ENCODE measurements at regions of chr11 and their contacts with region 1.

Region 1: GRCh38 chr11:34192481-34193401 is 87.3 kb downstream of the NAT10 start:
- DNase-seq: peak; percentile 60 to 91
- H3K4me3 ChIP-seq: peak overlapping the region; percentile 6 to 36
- H3K27ac ChIP-seq: peak overlapping the region; percentile 85 to 86
- H3K4me1 ChIP-seq: peaks cover 0 to 30% of the 10 kb centered on the region in 2 donors
- H3K27me3 ChIP-seq: no peaks in the 10 kb centered on the region
- CTCF ChIP-seq: no peak

Region 2: DNA sequence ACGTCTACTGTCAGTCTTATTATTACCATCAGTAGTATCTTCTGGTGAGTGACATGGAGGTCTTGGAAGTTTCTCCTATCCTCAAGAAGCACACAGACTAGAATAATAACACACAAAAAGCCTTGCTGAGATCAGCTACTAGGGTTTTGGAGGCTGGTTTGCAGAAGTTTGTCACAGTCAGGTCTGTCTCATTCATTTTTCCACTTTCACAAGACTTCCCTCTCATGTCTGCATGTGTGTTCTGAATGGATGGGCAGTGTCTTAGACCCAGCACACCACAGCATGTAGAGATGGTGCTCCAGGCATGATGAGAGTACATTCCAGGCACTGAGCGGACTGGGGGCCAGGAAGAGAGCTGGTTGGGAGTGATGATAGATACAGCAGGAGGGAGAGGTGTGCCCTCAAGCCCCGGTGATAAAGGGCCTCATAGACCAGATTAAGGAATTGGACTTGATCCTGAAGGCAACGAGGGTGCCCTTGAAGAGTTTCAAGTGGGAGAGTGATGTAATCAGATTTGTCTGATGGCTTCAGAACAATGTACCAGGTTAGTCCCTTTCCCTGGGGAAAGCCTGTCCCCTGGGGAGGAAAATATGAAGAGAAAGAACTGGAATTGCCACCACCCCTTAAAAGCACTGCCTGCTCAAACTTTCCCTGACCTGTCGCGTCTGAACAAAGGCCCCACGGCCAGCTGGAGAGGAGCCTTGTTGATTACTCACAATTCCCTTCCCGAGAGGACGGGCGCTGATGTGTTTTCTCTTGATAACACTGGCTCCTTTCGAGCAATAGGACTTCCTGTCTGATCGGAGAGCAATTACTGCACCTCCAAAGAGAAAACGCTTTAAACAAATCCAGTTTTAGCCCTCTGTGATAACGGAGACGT is 255.8 kb before region 1 on chr11:
- intact Hi-C with region 1: no loop called
- DNase-seq: peak; percentile 57 to 92
- H3K4me3 ChIP-seq: peak overlapping the region in 1 of 2 donors; percentile 9
- H3K27ac ChIP-seq: peak overlapping the region; percentile 76 to 79
- H3K4me1 ChIP-seq: peaks cover 9 to 39% of the 10 kb centered on the region in 2 donors
- H3K27me3 ChIP-seq: no peaks in the 10 kb centered on the region
- CTCF ChIP-seq: no peak

Region 3: GRCh38 chr11:34174412-34175041 is 18.2 kb before region 1 on chr11:
- intact Hi-C with region 1: loop called (anchors 1 kb)
- DNase-seq: peak in 1 of 2 donors; percentile 89
- H3K4me3 ChIP-seq: peak overlapping the region; percentile 47 to 58
- H3K27ac ChIP-seq: peak overlapping the region; percentile 13 to 31
- H3K4me1 ChIP-seq: peaks cover 5 to 7% of the 10 kb centered on the region in 2 donors
- H3K27me3 ChIP-seq: no peaks in the 10 kb centered on the region
- CTCF ChIP-seq: peak; percentile 95 to 99 (median 99)

Region 4: DNA sequence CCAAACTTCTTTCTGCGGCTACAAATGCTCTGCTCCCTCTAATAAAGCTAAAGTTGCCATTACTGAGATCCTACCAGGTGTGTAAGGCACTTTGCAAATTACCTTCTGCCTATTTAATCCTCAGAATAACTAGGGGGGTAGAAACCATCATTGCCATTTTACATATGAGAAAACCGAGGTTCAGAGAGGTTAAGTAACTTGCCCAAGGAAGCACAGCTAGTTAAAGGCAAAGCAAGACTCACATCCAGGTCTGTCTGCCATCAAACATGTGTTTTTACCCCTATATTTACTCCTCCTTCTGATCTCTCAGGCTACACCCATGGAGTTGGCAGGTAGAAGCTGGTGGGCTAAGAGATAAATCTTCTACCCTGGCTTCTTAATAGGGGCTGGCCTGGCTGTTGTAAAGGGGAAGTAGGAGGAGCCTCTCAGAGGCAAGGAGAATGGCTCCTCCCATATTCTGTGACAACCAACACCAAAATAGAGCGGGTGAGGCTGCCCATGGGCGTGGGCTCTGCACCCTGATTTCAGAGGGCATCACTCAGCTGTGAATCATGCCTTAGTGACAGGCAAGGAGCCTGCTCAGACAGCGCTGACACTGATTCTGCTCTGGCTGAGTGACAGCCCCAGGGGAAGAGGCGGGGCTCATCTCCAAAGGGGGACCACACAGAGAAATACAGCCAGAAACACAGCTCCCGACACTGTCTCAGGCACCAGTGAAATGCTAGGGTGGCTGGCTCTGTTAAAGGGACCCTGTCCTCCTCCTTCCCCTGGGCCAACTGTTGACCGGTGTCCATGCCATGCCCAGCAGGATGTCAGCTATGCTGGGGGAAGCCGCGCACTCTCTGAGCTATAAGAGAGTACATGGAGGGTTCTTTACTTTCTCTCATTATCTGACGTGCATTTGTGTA is 58.2 kb after region 1 on chr11:
- intact Hi-C with region 1: loop called (anchors 5 kb)
- DNase-seq: peak; percentile 37 to 87
- H3K4me3 ChIP-seq: peak overlapping the region; percentile 11 to 50
- H3K27ac ChIP-seq: peak overlapping the region; percentile 78 to 86
- H3K4me1 ChIP-seq: peaks cover 3 to 11% of the 10 kb centered on the region in 2 donors
- H3K27me3 ChIP-seq: no peaks in the 10 kb centered on the region
- CTCF ChIP-seq: no peak

Region 5: GRCh38 chr11:34274723-34275401 is 82.1 kb after region 1 on chr11:
- intact Hi-C with region 1: loop called (anchors 5 kb)
- DNase-seq: peak; percentile 71 to 97
- H3K4me3 ChIP-seq: no peak overlapping the region
- H3K27ac ChIP-seq: peak overlapping the region; percentile 76 to 80
- H3K4me1 ChIP-seq: peaks cover 4 to 13% of the 10 kb centered on the region in 2 donors
- H3K27me3 ChIP-seq: no peaks in the 10 kb centered on the region
- CTCF ChIP-seq: no peak

Region 6: GRCh38 chr11:34308913-34309585 is 116.3 kb after region 1 on chr11:
- intact Hi-C with region 1: loop called (anchors 5 kb)
- DNase-seq: no peak
- H3K4me3 ChIP-seq: no peak overlapping the region
- H3K27ac ChIP-seq: peak overlapping the region in 1 of 2 donors; percentile 41
- H3K4me1 ChIP-seq: peaks cover 3 to 10% of the 10 kb centered on the region in 2 donors
- H3K27me3 ChIP-seq: no peaks in the 10 kb centered on the region
- CTCF ChIP-seq: no peak

Region 7: DNA sequence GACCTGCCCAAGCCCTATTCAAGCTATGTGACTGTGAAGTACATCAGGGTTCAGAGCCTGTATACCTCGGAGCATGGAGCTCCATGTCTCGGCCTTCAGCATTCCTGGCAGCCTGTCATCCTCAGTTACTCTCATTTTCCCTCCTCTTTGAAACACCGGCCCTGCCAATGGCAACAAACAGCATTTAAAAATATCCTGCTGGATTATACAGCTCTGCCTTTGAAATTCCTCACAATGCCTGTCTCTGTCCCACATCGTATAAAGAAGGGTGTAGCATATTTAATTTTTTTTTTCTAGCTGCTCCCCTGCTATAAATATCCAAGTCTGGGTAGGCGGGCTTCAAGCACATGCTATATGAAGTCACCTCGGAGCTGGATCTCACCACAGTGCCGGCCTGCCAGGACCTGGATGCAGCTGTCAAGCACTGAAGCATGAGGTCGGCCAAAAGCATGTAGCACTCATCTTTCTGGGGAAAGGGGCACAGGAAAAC is 153.3 kb after region 1 on chr11:
- intact Hi-C with region 1: loop called (anchors 1 kb)
- DNase-seq: peak; percentile 47 to 85
- H3K4me3 ChIP-seq: peak overlapping the region in 1 of 2 donors; percentile 27
- H3K27ac ChIP-seq: peak overlapping the region; percentile 78 to 94
- H3K4me1 ChIP-seq: peaks cover 15 to 76% of the 10 kb centered on the region in 2 donors
- H3K27me3 ChIP-seq: no peaks in the 10 kb centered on the region
- CTCF ChIP-seq: no peak